ENCODE measurements at regions of chr11 and their contacts with region 1.

Region 1: GRCh38 chr11:8087185-8087584 is 6.2 kb downstream of the TUB start:
- H3K4me3 ChIP-seq: no peak overlapping the region
- H3K27ac ChIP-seq: no peak overlapping the region
- H3K4me1 ChIP-seq: peaks cover 9% of the 10 kb centered on the region; the same call in 1 of the 2 replicates
- CTCF ChIP-seq: no peak

Region 2: DNA sequence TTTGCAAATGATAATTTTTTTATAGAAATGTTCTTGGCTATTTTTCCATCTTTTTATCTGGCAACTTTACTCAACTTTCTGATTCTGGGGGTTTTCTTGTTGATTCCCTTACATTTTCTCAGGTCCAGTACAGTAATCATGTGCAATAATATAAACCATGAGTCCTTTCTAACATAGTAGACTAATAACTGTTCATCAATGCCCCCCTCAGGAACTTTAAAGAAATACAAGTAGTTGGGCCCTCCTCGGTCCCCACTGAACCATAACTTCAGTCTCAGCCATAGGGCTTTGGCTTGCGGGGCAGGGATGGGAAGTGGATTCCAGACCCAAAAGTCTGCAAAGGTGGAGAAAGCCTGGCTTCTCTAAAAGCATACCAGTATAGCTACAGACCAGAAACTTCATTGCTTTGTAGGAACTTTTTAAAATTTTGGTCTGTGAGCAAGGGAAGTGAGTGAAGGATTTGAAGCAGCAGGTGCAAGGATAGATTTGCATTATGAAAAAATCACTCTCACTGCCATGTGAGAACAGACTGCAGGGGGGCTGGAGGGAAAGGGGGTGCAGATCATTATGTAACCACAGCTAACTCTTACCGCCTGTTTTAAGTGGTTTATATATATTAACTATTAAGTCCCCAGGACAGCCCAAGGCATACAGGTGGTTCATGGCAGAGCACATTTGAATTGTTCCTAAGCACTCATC is 16.6 kb before region 1 on chr11:
- CTCF ChIA-PET with region 1: interaction called, 34 read pairs
- POLR2A ChIA-PET with region 1: interaction called, 10 read pairs
- H3K4me3 ChIP-seq: no peak overlapping the region
- H3K27ac ChIP-seq: no peak overlapping the region
- H3K4me1 ChIP-seq: peaks cover 8% of the 10 kb centered on the region
- CTCF ChIP-seq: no peak

Region 3: DNA sequence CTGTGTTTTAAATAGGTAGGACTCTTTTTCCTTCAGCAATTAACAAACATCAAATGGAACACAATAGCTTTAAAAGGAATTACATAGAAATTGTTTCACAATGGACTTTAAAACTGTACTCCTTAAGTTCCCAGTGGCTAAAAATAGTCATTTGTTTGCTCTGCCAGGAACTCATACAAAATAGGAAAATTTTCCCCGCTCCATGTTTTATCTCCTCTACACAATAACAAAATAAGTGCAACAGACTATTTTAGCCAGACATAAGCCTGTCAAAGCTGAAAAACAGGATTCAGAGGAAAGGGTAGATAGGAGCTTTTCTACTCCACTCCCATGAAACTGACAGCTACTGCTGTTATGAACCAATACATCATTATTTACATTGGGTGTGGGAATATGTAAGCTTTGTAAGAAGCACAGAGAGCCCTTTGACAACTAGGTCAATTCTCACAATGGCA is 416.8 kb after region 1 on chr11:
- CTCF ChIA-PET with region 1: no interaction called
- POLR2A ChIA-PET with region 1: no interaction called
- H3K4me3 ChIP-seq: no peak overlapping the region
- H3K27ac ChIP-seq: no peak overlapping the region
- H3K4me1 ChIP-seq: no peaks in the 10 kb centered on the region
- CTCF ChIP-seq: no peak